Activated T-helper 1 cell treated with anti-CD3 and anti-CD28 coated beads, Interleukin-12 subunit alpha, Interleukin-12 subunit beta, Interleukin-2, Interleukin-4 antibody, amounts not matched to agents 30 ng/mL and 10 ng/mL and 1 ng/mL, durations not matched to agents 14 hours and 24 hours and 36 hours (primary cell): ENCODE measurements at regions of chr15 and their contacts with region 1.

Region 1: DNA sequence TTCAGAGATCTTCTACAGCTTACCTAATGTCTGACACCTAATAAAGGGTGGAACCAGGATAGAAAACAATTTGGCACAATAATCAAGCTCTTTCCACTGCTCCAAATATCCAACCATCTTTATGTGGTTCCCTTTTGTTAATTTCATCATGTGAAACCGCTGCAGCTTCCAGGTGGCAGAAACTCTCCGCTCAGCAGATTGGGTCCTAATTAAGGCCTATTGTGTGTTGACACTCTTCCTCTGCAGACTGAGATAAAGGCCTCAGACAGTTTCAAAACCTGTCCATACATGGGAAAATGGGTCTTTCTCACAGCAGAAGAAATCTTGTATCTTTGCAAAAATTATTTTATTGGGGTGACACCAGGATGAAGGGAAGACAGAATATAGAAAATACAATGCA is 1002.4 kb upstream of the SEMA6D start:
- DNase-seq: no peak
- H3K4me3 Mint-ChIP-seq: no peak overlapping the region
- H3K27ac Mint-ChIP-seq: no peak overlapping the region
- H3K4me1 Mint-ChIP-seq: no peaks in the 10 kb centered on the region
- H3K27me3 Mint-ChIP-seq: no peaks in the 10 kb centered on the region

Region 2: DNA sequence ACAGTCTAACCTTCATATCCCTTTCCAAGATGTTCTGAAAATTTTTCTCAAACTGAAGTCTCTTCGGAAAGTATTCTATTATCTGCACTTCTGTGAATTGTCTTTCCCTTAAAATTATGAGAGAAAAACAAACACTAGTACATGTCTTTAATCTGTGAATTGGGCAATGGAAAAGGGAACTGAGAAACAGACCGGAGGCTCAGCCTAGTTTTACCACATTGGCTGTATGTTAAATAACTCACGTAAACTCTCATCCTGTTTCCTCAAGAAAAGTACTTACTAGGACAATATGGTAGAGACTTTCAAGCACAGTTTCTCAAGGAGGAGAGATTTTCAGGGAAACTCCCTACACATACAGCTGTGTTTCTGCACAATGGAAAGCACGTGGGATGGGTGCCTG is 20.2 kb after region 1 on chr15:
- intact Hi-C with region 1: loop called (anchors 2 kb)
- DNase-seq: no peak
- H3K4me3 Mint-ChIP-seq: no peak overlapping the region
- H3K27ac Mint-ChIP-seq: no peak overlapping the region
- H3K4me1 Mint-ChIP-seq: no peaks in the 10 kb centered on the region
- H3K27me3 Mint-ChIP-seq: no peaks in the 10 kb centered on the region

Region 3: DNA sequence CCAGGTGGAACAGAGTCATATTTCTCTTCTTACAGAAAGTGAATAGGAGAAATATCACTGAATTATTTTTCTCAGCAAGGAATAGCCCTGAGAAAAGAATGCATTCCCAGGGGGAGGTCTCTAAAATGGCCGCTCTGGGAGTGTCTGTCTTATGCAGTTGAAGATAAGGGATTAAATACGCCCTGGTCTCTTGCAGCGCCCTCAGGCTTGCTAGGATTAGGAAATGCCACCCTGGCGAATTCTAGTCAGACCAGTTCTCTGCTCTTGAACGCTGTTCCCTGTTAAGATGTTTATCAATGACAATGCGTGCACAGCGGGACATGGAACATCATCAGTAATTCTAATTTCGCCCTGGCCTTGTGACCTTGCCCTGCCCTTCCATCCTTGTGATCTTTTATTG is 53.3 kb after region 1 on chr15:
- intact Hi-C with region 1: no loop called
- DNase-seq: no peak
- H3K4me3 Mint-ChIP-seq: no peak overlapping the region
- H3K27ac Mint-ChIP-seq: no peak overlapping the region
- H3K4me1 Mint-ChIP-seq: no peaks in the 10 kb centered on the region
- H3K27me3 Mint-ChIP-seq: no peaks in the 10 kb centered on the region

Region 4: GRCh38 chr15:46901001-46901400 is 186.1 kb after region 1 on chr15:
- intact Hi-C with region 1: no loop called
- DNase-seq: no peak
- H3K4me3 Mint-ChIP-seq: no peak overlapping the region
- H3K27ac Mint-ChIP-seq: no peak overlapping the region
- H3K4me1 Mint-ChIP-seq: no peaks in the 10 kb centered on the region
- H3K27me3 Mint-ChIP-seq: no peaks in the 10 kb centered on the region